PC-3 (cell line): ENCODE measurements at regions of chr20 and their contacts with region 1.

Region 1: DNA sequence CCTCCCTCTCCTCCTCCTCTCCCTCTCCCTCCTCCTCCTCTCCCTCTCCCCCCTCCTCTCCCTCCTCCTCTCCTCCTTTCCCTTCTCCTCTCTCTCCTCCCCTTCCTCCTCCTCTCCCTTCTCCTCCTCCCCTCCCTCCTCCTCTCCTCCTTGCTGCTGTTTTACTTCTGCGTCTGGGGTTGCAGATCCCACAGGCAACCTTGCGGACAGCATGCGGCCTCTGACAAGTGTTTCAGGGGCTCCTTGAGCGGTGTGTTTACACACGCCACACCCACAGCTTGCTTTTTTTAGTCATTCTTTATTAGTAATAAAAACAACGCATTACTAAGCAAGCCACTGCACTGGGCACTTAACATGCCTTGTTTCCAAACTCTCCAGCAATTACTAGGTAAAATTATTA is 81.9 kb downstream of the TFAP2C start:
- DNase-seq: peak; percentile 97
- ATAC-seq: peak; percentile 92
- H3K4me3 ChIP-seq: no peak overlapping the region
- H3K27ac ChIP-seq: peak overlapping the region; percentile 87
- H3K4me1 ChIP-seq: peaks cover 14% of the 10 kb centered on the region
- H3K27me3 ChIP-seq: no peaks in the 10 kb centered on the region
- CTCF ChIP-seq: no peak

Region 2: DNA sequence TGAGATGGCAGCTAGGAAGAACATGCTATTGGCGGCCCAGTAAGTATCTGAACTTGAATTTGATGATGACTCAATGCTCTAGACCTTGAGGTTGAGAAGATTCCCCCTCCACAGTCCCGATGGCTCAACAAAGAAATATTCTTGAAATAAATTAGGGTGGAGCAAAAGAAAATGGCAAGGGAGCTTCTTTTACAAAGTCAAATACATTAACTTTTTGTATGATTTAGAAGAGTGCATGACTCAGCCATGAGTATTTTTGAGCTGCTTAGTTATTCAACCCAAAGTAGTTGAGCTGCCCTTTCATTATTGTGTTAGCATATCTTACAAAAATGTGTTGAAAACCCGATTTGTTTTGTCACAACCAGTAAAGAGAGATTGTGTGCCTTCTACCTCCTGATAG is 74.3 kb before region 1 on chr20:
- CTCF ChIA-PET with region 1: no interaction called
- POLR2A ChIA-PET with region 1: no interaction called
- intact Hi-C with region 1: loop called (anchors 1 kb)
- DNase-seq: peak; percentile 98
- ATAC-seq: peak; percentile 68
- H3K4me3 ChIP-seq: peak overlapping the region; percentile 8; the same call in 1 of the 2 replicates
- H3K27ac ChIP-seq: peak overlapping the region; percentile 73
- H3K4me1 ChIP-seq: peaks cover 55% of the 10 kb centered on the region
- H3K27me3 ChIP-seq: no peaks in the 10 kb centered on the region
- CTCF ChIP-seq: no peak

Region 3: DNA sequence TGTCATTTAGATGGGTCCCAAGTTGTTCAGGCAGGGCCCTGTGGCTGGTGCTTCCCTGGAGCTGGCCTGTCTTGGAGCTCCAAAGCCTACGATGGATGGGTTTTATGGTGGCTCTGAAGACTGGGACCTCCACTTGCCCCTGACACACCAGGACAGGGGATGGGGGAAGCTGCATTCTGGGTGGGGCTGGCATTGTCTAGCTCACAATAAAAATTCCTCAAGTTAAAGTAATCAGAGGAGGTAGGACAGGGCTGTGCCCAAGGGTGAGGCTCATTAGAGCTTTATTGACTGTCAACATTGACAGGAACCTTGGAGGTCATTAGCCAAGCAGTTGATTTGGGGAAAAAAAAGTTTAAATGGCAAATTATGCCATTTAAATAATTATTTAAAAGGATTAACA is 46.2 kb before region 1 on chr20:
- CTCF ChIA-PET with region 1: no interaction called
- POLR2A ChIA-PET with region 1: no interaction called
- intact Hi-C with region 1: loop called (anchors 1 kb)
- DNase-seq: peak; percentile 57
- ATAC-seq: peak; percentile 68
- H3K4me3 ChIP-seq: no peak overlapping the region
- H3K27ac ChIP-seq: no peak overlapping the region
- H3K4me1 ChIP-seq: peaks cover 12% of the 10 kb centered on the region
- H3K27me3 ChIP-seq: no peaks in the 10 kb centered on the region
- CTCF ChIP-seq: no peak

Region 4: GRCh38 chr20:56676001-56676400 is 35.0 kb before region 1 on chr20:
- CTCF ChIA-PET with region 1: interaction called, 11 read pairs
- POLR2A ChIA-PET with region 1: no interaction called
- intact Hi-C with region 1: no loop called
- DNase-seq: no peak
- ATAC-seq: no peak
- H3K4me3 ChIP-seq: no peak overlapping the region
- H3K27ac ChIP-seq: no peak overlapping the region
- H3K4me1 ChIP-seq: no peaks in the 10 kb centered on the region
- H3K27me3 ChIP-seq: no peaks in the 10 kb centered on the region
- CTCF ChIP-seq: no peak

Region 5: GRCh38 chr20:56698749-56699148 is 12.3 kb before region 1 on chr20:
- CTCF ChIA-PET with region 1: no interaction called
- POLR2A ChIA-PET with region 1: no interaction called
- intact Hi-C with region 1: no loop called
- DNase-seq: no peak
- ATAC-seq: no peak
- H3K4me3 ChIP-seq: no peak overlapping the region
- H3K27ac ChIP-seq: no peak overlapping the region
- H3K4me1 ChIP-seq: no peaks in the 10 kb centered on the region
- H3K27me3 ChIP-seq: no peaks in the 10 kb centered on the region
- CTCF ChIP-seq: no peak

Region 6: DNA sequence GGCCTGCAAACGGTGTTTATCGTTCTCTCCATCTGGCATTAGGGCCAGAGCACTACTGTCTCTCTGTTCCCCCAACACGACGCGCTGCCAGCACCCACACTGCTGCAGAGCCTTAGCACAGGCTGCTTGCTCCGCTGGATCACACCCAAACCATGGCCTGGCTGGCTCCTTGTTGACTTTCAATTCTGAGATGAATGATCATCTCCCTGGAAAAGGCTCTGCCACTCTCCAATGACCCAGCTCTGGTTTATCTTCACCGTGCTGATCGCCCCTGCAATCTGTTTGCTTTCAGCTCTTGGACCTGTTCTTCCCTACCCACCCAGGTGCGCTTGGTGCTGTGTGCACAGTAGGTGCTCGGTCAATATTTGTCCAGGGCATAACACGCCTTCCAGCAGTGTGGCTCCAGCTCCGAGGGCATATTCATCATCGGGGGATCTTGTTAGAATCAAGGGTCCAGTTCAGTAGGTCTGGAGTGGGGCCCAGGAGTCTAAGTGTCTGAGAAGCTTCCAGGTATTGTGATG is 24.2 kb after region 1 on chr20:
- CTCF ChIA-PET with region 1: no interaction called
- POLR2A ChIA-PET with region 1: no interaction called
- intact Hi-C with region 1: no loop called
- DNase-seq: no peak
- ATAC-seq: no peak
- H3K4me3 ChIP-seq: no peak overlapping the region
- H3K27ac ChIP-seq: no peak overlapping the region
- H3K4me1 ChIP-seq: peaks cover 6% of the 10 kb centered on the region; the same call in 1 of the 2 replicates
- H3K27me3 ChIP-seq: no peaks in the 10 kb centered on the region
- CTCF ChIP-seq: no peak

Region 7: GRCh38 chr20:56752279-56752833 is 41.3 kb after region 1 on chr20:
- CTCF ChIA-PET with region 1: no interaction called
- POLR2A ChIA-PET with region 1: no interaction called
- intact Hi-C with region 1: no loop called
- DNase-seq: peak; percentile 34
- ATAC-seq: peak; percentile 73
- H3K4me3 ChIP-seq: no peak overlapping the region
- H3K27ac ChIP-seq: no peak overlapping the region
- H3K4me1 ChIP-seq: peaks cover 5% of the 10 kb centered on the region; the same call in 1 of the 2 replicates
- H3K27me3 ChIP-seq: no peaks in the 10 kb centered on the region
- CTCF ChIP-seq: no peak

Region 8: DNA sequence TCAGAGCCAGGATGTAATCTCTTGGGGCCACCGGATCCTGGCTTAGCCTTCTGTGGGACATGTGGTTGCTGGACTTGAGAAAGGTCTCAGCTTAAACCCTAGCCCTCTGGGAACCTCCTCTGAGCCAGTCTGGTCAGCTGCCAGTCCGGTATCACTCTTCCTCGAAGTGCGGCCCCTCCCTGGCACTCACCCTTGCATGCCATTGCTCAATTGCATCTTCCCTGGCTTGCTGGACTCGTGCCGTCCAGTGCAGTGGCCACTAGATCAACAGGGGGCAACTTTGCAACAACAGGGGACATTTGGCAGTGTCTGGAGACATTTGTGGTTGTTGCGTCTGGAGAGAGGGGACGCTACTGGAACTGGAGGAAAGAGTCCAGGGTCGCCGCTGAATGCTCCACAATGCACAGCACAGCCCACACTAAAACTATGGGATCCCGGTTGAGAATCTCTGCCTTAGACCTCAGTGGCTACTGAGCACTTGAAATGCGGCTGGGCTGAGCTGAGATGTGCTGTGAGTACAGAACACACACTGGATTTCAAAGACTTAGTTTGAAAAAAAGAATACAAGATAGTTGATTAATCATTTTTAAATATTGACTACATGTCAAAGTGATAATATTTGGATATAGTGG is 70.2 kb after region 1 on chr20:
- CTCF ChIA-PET with region 1: no interaction called
- POLR2A ChIA-PET with region 1: no interaction called
- intact Hi-C with region 1: no loop called
- DNase-seq: no peak
- ATAC-seq: no peak
- H3K4me3 ChIP-seq: no peak overlapping the region
- H3K27ac ChIP-seq: no peak overlapping the region
- H3K4me1 ChIP-seq: peaks cover 20% of the 10 kb centered on the region
- H3K27me3 ChIP-seq: no peaks in the 10 kb centered on the region
- CTCF ChIP-seq: no peak